Endothelial cell of umbilical vein (primary cell): ENCODE measurements at regions of chr9 and their contacts with region 1.

Region 1: GRCh38 chr9:126965541-126966428 is 51.2 kb downstream of the RALGPS1 start:
- DNase-seq: peak; percentile 82
- H3K4me3 ChIP-seq: no peak overlapping the region
- H3K27ac ChIP-seq: no peak overlapping the region
- H3K4me1 ChIP-seq: peaks cover 1% of the 10 kb centered on the region
- H3K27me3 ChIP-seq: no peaks in the 10 kb centered on the region
- CTCF ChIP-seq: peak; percentile 81 to 88
- POLR2A ChIP-seq: no peak

Region 2: DNA sequence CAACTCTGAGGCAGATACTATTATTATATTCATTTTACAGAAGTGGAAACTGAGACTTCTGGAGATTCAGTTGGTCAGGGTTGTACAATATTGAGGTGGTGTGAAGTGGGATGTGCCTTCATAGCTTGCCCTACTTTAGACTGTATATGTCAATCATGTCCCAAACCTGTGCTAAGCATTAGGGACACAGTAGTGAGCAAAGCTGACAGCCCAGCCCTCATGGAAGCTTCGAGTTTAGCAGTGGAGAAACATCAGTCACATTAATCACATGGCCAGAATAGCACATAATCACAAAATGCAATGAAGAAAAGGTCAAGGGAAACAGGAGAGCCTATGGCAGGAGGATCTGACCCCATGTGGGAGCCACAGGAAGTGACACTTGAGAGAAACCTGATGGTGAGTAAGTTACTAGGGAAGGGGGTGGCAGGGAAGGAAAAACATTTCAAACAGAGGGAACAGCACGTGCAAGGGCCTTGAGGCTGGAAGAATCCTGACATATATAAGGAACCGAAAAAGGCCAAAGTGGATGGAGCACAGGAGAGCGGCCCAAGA is 71.7 kb before region 1 on chr9:
- CTCF ChIA-PET with region 1: no interaction called
- POLR2A ChIA-PET with region 1: no interaction called
- dilution Hi-C with region 1: no loop called
- intact Hi-C with region 1: no loop called
- DNase-seq: no peak
- H3K4me3 ChIP-seq: no peak overlapping the region
- H3K27ac ChIP-seq: no peak overlapping the region
- H3K4me1 ChIP-seq: no peaks in the 10 kb centered on the region
- H3K27me3 ChIP-seq: no peaks in the 10 kb centered on the region
- CTCF ChIP-seq: no peak
- POLR2A ChIP-seq: no peak

Region 3: DNA sequence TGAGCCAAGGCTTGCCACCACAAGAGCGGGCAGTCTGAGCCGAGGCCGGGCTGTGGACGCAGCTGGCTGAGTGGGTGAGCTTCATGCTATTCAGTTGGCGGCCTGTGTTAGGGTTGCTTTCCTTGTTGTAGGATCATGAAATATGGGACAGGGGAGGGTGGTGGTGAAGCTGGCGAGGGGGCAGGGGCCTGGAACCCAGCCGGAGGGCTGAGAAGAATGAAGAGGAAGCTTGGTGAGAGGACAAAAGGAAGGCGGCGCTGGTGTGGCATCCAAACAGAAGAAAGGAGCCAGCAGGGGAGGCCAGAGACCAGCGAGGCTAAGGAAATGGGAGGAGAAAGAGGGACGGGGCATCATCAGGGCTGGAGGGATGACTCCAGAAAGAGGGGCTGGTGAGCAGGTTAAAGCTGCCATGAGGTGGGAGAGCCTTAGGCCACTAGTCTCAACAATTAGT is 32.9 kb before region 1 on chr9:
- CTCF ChIA-PET with region 1: no interaction called
- POLR2A ChIA-PET with region 1: no interaction called
- dilution Hi-C with region 1: no loop called
- intact Hi-C with region 1: no loop called
- DNase-seq: no peak
- H3K4me3 ChIP-seq: no peak overlapping the region
- H3K27ac ChIP-seq: no peak overlapping the region
- H3K4me1 ChIP-seq: no peaks in the 10 kb centered on the region
- H3K27me3 ChIP-seq: peaks cover 8 to 16% of the 10 kb centered on the region in 2 experiments
- CTCF ChIP-seq: no peak
- POLR2A ChIP-seq: no peak

Region 4: GRCh38 chr9:127035951-127036350 is 70.2 kb after region 1 on chr9:
- CTCF ChIA-PET with region 1: no interaction called
- POLR2A ChIA-PET with region 1: no interaction called
- dilution Hi-C with region 1: no loop called
- intact Hi-C with region 1: no loop called
- DNase-seq: peak; percentile 80
- H3K4me3 ChIP-seq: no peak overlapping the region
- H3K27ac ChIP-seq: no peak overlapping the region
- H3K4me1 ChIP-seq: no peaks in the 10 kb centered on the region
- H3K27me3 ChIP-seq: no peaks in the 10 kb centered on the region
- CTCF ChIP-seq: no peak
- POLR2A ChIP-seq: no peak

Region 5: GRCh38 chr9:127199001-127199791 is 233.4 kb after region 1 on chr9:
- CTCF ChIA-PET with region 1: interaction called, 44 read pairs
- POLR2A ChIA-PET with region 1: no interaction called
- dilution Hi-C with region 1: no loop called
- intact Hi-C with region 1: loop called (anchors 1 kb)
- DNase-seq: peak; percentile 81
- H3K4me3 ChIP-seq: no peak overlapping the region
- H3K27ac ChIP-seq: no peak overlapping the region
- H3K4me1 ChIP-seq: no peaks in the 10 kb centered on the region
- H3K27me3 ChIP-seq: no peaks in the 10 kb centered on the region
- CTCF ChIP-seq: peak; percentile 82 to 89
- POLR2A ChIP-seq: no peak